Endothelial cell of umbilical vein (primary cell): ENCODE measurements at regions of chr11 and their contacts with region 1.

Region 1: DNA sequence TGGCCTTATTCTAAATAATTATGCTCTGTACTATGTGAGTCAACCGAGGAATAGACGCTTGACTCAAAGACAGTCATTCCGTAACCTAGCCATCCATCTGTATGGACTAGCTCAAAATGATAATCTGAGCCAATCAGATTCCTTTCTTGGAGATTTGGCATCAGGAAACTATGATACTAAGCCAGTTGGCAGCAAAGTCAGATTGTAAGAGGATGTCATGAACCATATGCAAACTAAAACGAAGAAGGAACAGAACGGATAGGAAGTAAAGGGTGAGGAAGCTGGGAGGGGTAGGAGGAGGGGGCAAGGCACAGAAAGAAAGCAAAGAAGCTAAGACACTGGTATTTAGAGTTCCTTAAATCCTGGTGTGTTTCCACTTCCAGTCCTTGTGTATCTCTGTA is 10.7 kb upstream of the SESN3 start:
- DNase-seq: no peak
- H3K4me3 ChIP-seq: no peak overlapping the region
- H3K27ac ChIP-seq: no peak overlapping the region
- H3K4me1 ChIP-seq: no peaks in the 10 kb centered on the region
- H3K27me3 ChIP-seq: peaks cover 7% of the 10 kb centered on the region in 2 experiments
- CTCF ChIP-seq: no peak
- POLR2A ChIP-seq: no peak

Region 2: GRCh38 chr11:95453616-95454171 is 212.0 kb after region 1 on chr11:
- CTCF ChIA-PET with region 1: no interaction called
- POLR2A ChIA-PET with region 1: no interaction called
- dilution Hi-C with region 1: no loop called
- intact Hi-C with region 1: loop called (anchors 5 kb)
- DNase-seq: no peak
- H3K4me3 ChIP-seq: no peak overlapping the region
- H3K27ac ChIP-seq: no peak overlapping the region
- H3K4me1 ChIP-seq: peaks cover 13% of the 10 kb centered on the region
- H3K27me3 ChIP-seq: no peaks in the 10 kb centered on the region
- CTCF ChIP-seq: no peak
- POLR2A ChIP-seq: no peak